ENCODE measurements at regions of chr1 and their contacts with region 1.

Region 1: GRCh38 chr1:156797212-156797871 is 19.3 kb downstream of the SH2D2A start:
- DNase-seq: peak; percentile 68
- H3K4me3 ChIP-seq: no peak overlapping the region; a peak in 1 of 4 replicates
- H3K27ac ChIP-seq: peak overlapping the region in 1 of 2 experiments; percentile 85; a peak in 2 of 4 replicates
- H3K4me1 ChIP-seq: peaks cover 20 to 59% of the 10 kb centered on the region in 2 experiments
- H3K27me3 ChIP-seq: no peaks in the 10 kb centered on the region
- CTCF ChIP-seq: peak; percentile 94
- EP300 ChIP-seq: peak in 1 of 2 experiments; percentile 83; a peak in 2 of 4 replicates
- RAD21 ChIP-seq: peak; percentile 90

Region 2: GRCh38 chr1:156767101-156767878 is 30.1 kb before region 1 on chr1 and contains the start of gene PRCC:
- CTCF ChIA-PET with region 1: interaction called, 19 read pairs
- POLR2A ChIA-PET with region 1: interaction called, 12 read pairs
- DNase-seq: peak; percentile 87
- H3K4me3 ChIP-seq: peak within 1 kb of the TSS; percentile 72 to 86
- H3K27ac ChIP-seq: peak within 1 kb of the TSS; percentile 77 to 90
- H3K4me1 ChIP-seq: peaks cover 23 to 26% of the 10 kb centered on the region in 2 experiments; a peak in 3 of 4 replicates
- H3K27me3 ChIP-seq: no peaks in the 10 kb centered on the region
- CTCF ChIP-seq: 0 out of 2 replicates have a peak, but pooled peaks have one; percentile 7
- EP300 ChIP-seq: peak; percentile 10 to 20; a peak in 2 of 4 replicates
- RAD21 ChIP-seq: peak; percentile 29; the same call in 1 of the 2 replicates
- polyA plus RNA-seq, gene PRCC: 39.2 and 51.8 TPM in 2 replicates

Region 3: GRCh38 chr1:156781585-156782186 is 15.7 kb before region 1 on chr1:
- CTCF ChIA-PET with region 1: interaction called, 39 read pairs
- POLR2A ChIA-PET with region 1: interaction called, 4 read pairs
- DNase-seq: no peak
- H3K4me3 ChIP-seq: no peak overlapping the region
- H3K27ac ChIP-seq: peak overlapping the region; percentile 2 to 43; a peak in 2 of 4 replicates
- H3K4me1 ChIP-seq: peaks cover 9 to 13% of the 10 kb centered on the region in 2 experiments; a peak in 3 of 4 replicates
- H3K27me3 ChIP-seq: no peaks in the 10 kb centered on the region
- CTCF ChIP-seq: no peak
- EP300 ChIP-seq: no peak
- RAD21 ChIP-seq: no peak

Region 4: DNA sequence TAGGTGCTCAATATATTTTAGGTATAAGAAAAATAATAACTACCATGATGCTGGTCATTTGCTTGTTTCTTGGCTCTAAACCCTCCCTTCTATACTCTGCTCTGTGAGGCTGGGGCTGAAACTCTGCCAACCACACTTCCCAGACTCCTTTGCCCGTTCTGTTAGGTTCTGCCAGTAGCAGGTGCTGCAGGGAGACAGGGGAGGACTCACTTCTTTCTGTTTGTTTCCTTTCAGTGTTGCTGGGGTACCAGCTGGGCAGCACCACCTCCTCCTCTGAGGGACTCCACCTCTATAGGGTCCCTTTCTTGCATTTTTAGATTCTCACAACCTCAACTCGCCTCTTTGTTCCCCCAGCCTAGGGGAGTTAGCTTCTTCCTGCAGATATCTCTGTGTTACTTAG is 36.3 kb after region 1 on chr1:
- CTCF ChIA-PET with region 1: interaction called, 186 read pairs
- POLR2A ChIA-PET with region 1: interaction called, 8 read pairs
- DNase-seq: no peak
- H3K4me3 ChIP-seq: no peak overlapping the region
- H3K27ac ChIP-seq: no peak overlapping the region
- H3K4me1 ChIP-seq: peaks cover 0 to 57% of the 10 kb centered on the region in 2 experiments; a peak in 2 of 4 replicates
- H3K27me3 ChIP-seq: peaks cover 9% of the 10 kb centered on the region; the same call in 1 of the 2 replicates
- CTCF ChIP-seq: no peak
- EP300 ChIP-seq: no peak
- RAD21 ChIP-seq: no peak

Region 5: GRCh38 chr1:156866249-156866909 is 69.0 kb after region 1 on chr1:
- CTCF ChIA-PET with region 1: interaction called, 566 read pairs
- POLR2A ChIA-PET with region 1: interaction called, 97 read pairs
- DNase-seq: no peak
- H3K4me3 ChIP-seq: no peak overlapping the region
- H3K27ac ChIP-seq: no peak overlapping the region
- H3K4me1 ChIP-seq: peaks cover 8 to 27% of the 10 kb centered on the region in 2 experiments; a peak in 2 of 4 replicates
- H3K27me3 ChIP-seq: peaks cover 11% of the 10 kb centered on the region; the same call in 1 of the 2 replicates
- CTCF ChIP-seq: no peak
- EP300 ChIP-seq: no peak
- RAD21 ChIP-seq: no peak

Region 6: DNA sequence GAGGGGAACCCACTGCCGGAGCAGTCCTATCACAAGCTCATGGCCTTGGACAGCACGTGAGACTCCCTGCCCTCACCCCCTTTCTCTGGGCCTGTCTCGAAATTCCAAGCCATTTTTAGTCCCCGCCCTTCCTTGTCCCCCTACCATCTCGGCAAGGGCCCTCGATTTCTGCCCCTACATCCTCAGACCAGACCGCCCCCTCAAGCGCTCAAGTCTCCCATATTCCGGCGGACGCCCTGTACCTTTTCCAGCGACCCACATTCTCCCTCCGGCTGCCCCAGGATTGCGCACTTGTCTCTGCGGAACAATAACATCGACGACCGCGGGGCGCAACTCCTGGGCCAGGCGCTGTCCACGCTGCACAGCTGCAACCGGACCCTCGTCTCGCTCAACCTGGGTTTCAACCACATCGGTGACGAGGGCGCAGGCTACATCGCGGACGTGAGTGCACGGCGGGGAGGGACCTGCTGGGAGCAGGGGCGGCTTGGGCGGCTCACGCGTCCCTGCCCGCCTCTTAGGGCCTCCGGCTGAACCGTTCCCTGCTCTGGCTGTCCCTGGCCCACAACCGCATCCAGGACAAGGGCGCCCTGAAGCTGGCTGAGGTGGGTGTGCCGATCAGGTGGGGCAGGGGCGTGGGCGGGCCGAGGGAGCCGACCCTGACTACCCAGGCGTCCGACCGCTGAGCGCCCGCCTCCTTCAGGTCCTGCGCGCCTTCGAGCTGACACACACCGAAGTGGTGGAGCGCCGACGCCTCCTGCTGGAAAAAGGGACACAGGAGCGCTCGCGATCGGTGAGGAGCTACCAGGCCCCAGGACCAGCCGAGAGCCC is 130.1 kb after region 1 on chr1:
- CTCF ChIA-PET with region 1: interaction called, 91 read pairs
- POLR2A ChIA-PET with region 1: no interaction called
- DNase-seq: peak; percentile 91
- H3K4me3 ChIP-seq: peak overlapping the region; percentile 37 to 44; a peak in 3 of 4 replicates
- H3K27ac ChIP-seq: peak overlapping the region in 1 of 2 experiments; percentile 6; a peak in 1 of 4 replicates
- H3K4me1 ChIP-seq: peaks cover 5 to 25% of the 10 kb centered on the region in 2 experiments; a peak in 2 of 4 replicates
- H3K27me3 ChIP-seq: no peaks in the 10 kb centered on the region
- CTCF ChIP-seq: peak; percentile 84
- EP300 ChIP-seq: no peak
- RAD21 ChIP-seq: peak; percentile 94

Measured in SK-N-SH (cell line).